GM12878 (cell line): ENCODE measurements at regions of chrX and their contacts with region 1.

Region 1: DNA sequence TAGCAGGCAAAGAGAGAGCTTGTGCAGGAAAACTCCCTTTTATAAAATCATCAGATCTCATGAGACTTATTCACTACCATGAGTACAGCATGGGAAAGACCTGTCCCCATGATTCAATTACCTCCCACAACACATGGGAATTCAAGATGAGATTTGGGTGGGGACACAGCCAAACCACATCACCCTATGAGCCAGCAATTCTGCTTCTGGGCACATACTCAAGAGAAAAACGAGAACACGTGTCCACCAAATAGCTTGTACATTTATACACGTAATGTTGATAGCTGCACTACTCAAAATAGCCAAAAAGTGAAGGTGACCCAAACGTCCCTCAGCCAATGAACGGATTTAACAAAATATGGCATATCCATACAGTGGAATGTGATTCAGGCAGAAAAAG is 94.5 kb upstream of the DHRSX start:
- DNase-seq: no peak
- ATAC-seq: no peak
- H3K4me3 ChIP-seq: no peak overlapping the region
- H3K27ac ChIP-seq: no peak overlapping the region
- H3K4me1 ChIP-seq: no peaks in the 10 kb centered on the region
- H3K27me3 ChIP-seq: no peaks in the 10 kb centered on the region
- CTCF ChIP-seq: no peak
- EP300 ChIP-seq: no peak
- POLR2A ChIP-seq: no peak
- RAD21 ChIP-seq: no peak

Region 2: GRCh38 chrX:1673337-1673736 is 921.9 kb before region 1 on chrX:
- CTCF ChIA-PET with region 1: no interaction called
- POLR2A ChIA-PET with region 1: no interaction called
- RAD21 ChIA-PET with region 1: no interaction called
- SMC1A ChIA-PET with region 1: no interaction called
- in situ Hi-C with region 1: no loop called
- intact Hi-C with region 1: loop called (anchors 1 kb)
- DNase-seq: no peak
- ATAC-seq: peak; percentile 78
- H3K4me3 ChIP-seq: no peak overlapping the region
- H3K27ac ChIP-seq: no peak overlapping the region
- H3K4me1 ChIP-seq: no peaks in the 10 kb centered on the region
- H3K27me3 ChIP-seq: no peaks in the 10 kb centered on the region
- CTCF ChIP-seq: peak; percentile 48 to 78 (median 69)
- EP300 ChIP-seq: no peak
- POLR2A ChIP-seq: no peak
- RAD21 ChIP-seq: peak; percentile 61